ENCODE measurements at regions of chr1 and their contacts with region 1.

Region 1: DNA sequence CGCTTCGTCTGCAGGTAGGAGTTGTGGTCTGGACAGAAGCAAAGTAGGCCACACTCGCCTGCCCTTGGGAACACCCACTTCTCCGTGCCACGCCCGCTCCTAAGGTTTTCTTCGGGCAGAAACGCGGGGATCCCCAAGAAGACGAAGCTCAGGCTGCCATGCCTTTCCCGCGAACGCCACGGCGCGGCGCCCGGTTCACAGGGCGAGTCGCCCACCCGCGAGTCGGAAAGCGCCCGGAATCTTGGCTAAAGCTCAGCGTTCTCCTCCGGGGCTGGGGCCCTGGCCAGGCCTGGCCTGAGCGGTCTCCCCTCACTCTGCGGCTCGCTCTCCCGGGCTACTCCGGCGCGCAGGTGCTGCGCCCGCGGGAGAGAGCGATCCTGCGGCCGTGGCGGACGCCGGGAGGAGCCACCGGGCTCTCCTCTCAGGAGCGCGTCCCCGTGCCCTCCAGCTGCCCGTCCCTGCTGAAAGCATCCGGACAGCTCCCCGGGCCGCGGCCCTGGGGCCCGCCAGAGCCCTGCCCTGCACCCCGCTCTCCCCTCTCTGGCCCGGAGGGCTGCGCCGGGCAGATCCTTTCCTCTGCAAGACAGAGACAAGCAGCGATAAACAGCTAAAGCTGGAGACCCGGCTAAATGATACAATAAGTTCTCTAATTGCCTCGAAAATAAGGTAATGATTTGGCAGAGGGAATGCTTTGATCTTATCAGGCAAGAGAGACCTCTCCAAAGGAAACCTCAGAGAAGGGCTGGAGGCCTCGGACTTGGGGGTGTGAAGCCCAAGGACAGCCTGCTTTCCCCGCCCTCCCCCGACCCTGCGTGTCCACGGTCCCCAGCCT is 6.7 kb upstream of the WNT2B start:
- DNase-seq: peak; percentile 89
- H3K4me3 Mint-ChIP-seq: peak overlapping the region; percentile 71
- H3K27ac Mint-ChIP-seq: no peak overlapping the region
- H3K4me1 Mint-ChIP-seq: peaks cover 6% of the 10 kb centered on the region
- H3K27me3 Mint-ChIP-seq: peaks cover 66% of the 10 kb centered on the region

Region 2: DNA sequence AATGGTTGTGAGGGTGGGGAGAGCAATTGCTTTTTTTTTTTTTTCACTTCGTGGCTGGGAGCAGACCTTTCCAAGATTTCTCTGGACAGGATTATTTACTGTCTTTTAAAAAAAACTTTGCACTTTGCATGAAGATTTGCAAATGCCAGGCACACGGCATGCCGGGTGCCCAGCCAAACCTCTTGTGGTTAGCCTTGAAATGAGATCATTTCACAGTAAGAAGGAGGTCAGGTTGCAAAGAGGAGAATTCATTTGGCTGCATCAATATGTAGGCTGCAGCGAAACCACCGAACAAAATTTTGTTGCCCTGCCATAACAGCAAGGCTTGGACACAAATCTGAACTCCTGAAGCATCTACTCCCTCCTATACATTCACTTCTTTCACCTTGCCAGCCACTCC is 476.0 kb before region 1 on chr1:
- intact Hi-C with region 1: no loop called
- DNase-seq: no peak
- H3K4me3 Mint-ChIP-seq: no peak overlapping the region
- H3K27ac Mint-ChIP-seq: no peak overlapping the region
- H3K4me1 Mint-ChIP-seq: no peaks in the 10 kb centered on the region
- H3K27me3 Mint-ChIP-seq: peaks cover 3% of the 10 kb centered on the region

Region 3: DNA sequence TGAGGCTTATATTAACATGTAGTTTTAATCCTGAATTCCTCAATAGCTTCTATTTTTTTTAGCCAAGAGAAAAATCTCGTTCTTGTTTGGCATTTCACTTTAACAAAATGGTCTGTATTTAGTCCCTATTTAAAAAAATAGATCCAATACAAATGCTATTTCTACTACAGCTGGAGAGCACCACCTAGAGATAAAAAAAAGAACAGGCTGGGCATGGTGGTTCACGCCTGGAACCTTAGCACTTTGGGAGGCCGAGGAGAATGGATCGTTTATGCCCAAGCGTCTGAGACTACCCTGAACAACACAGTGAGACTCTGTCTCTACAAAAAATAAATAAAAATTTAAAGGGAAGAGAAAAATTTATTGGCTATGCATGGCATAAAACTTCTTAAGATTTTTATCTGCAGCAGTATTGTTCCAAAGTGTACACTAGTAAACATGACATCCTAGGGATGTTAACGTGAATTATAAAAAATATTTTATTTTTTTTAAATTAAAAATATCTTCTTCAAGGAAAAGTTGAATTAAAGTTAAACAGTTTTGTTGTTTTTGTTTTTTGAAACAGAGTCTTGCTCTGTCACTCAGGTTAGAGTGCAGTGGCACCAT is 112.5 kb after region 1 on chr1:
- intact Hi-C with region 1: loop called (anchors 2 kb)
- DNase-seq: peak; percentile 78
- H3K4me3 Mint-ChIP-seq: no peak overlapping the region
- H3K27ac Mint-ChIP-seq: no peak overlapping the region
- H3K4me1 Mint-ChIP-seq: peaks cover 22% of the 10 kb centered on the region
- H3K27me3 Mint-ChIP-seq: no peaks in the 10 kb centered on the region

Region 4: GRCh38 chr1:112706908-112707663 is 205.1 kb after region 1 on chr1 and contains the start of gene RHOC:
- intact Hi-C with region 1: loop called (anchors 2 kb)
- DNase-seq: peak; percentile 91
- H3K4me3 Mint-ChIP-seq: peak within 1 kb of the TSS; percentile 87
- H3K27ac Mint-ChIP-seq: peak within 1 kb of the TSS; percentile 94
- H3K4me1 Mint-ChIP-seq: peaks cover 56% of the 10 kb centered on the region
- H3K27me3 Mint-ChIP-seq: peaks cover 21% of the 10 kb centered on the region
- total RNA-seq, gene RHOC: 48.5 and 53.4 TPM in 2 replicates

Region 5: DNA sequence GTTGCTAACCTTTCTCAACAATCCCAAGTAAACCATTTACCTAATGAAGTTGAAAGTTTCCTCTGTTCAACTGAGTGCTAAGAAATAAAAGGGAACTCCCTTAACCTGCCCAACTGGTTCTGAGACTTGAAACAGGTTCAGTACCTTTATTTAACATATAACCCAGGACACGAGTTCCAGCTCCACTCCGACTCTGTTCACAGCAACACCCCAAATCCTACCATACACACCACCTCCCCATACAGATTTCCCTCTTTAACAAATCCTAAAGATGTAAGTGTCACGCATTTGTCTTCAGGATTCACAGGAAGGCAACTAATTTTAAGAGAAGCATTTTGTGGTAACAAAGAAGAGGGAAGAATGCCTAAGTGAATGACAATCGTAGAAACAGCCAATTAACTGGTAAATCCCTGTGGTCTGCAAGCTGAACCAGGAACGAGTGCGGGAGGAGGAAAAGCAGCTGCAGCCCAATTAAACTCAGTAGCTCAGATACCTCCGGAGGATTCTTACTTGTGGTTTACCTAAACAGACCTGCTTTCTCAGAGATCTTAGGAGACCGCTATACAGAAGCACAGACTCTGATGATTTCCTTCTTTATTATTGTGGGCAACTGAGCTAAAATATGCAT is 753.8 kb after region 1 on chr1:
- intact Hi-C with region 1: no loop called
- DNase-seq: no peak
- H3K4me3 Mint-ChIP-seq: no peak overlapping the region
- H3K27ac Mint-ChIP-seq: no peak overlapping the region
- H3K4me1 Mint-ChIP-seq: no peaks in the 10 kb centered on the region
- H3K27me3 Mint-ChIP-seq: peaks cover 16% of the 10 kb centered on the region